ENCODE measurements at regions of chr11 and their contacts with region 1.

Region 1: DNA sequence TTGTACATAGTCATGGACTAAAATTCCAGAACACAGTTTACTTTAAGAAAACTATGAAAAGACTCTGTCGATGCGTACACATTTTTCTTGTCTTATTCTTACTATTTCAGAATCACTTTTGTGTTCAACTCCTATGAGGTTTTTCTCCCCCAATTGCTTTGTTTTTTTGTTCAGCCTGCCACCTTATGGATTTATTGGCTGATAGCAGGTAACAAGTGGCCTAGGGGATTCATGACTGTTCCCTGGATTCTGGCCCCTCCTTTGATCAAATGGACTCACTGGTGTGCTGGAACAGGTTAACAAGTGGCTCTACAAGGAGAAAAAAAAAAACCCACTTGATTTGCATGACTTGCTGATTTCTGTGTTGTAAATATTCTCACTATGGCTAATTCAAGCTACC is 10.6 kb downstream of the MMP20 start:
- DNase-seq: no peak
- H3K4me3 Mint-ChIP-seq: no peak overlapping the region
- H3K27ac Mint-ChIP-seq: no peak overlapping the region
- H3K4me1 Mint-ChIP-seq: peaks cover 12% of the 10 kb centered on the region
- H3K27me3 Mint-ChIP-seq: no peaks in the 10 kb centered on the region

Region 2: GRCh38 chr11:102341844-102342318 is 272.6 kb before region 1 on chr11:
- CTCF ChIA-PET with region 1: interaction called, 19 read pairs
- POLR2A ChIA-PET with region 1: interaction called, 4 read pairs
- DNase-seq: peak; percentile 85
- H3K4me3 Mint-ChIP-seq: no peak overlapping the region
- H3K27ac Mint-ChIP-seq: no peak overlapping the region
- H3K4me1 Mint-ChIP-seq: peaks cover 17% of the 10 kb centered on the region
- H3K27me3 Mint-ChIP-seq: no peaks in the 10 kb centered on the region

Region 3: GRCh38 chr11:102367364-102367763 is 247.1 kb before region 1 on chr11:
- CTCF ChIA-PET with region 1: interaction called, 10 read pairs
- POLR2A ChIA-PET with region 1: no interaction called
- DNase-seq: no peak
- H3K4me3 Mint-ChIP-seq: no peak overlapping the region
- H3K27ac Mint-ChIP-seq: peak overlapping the region; percentile 36
- H3K4me1 Mint-ChIP-seq: peaks cover 38% of the 10 kb centered on the region
- H3K27me3 Mint-ChIP-seq: no peaks in the 10 kb centered on the region

Region 4: GRCh38 chr11:102592634-102593581 is 21.6 kb before region 1 on chr11:
- CTCF ChIA-PET with region 1: no interaction called
- POLR2A ChIA-PET with region 1: no interaction called
- DNase-seq: no peak
- H3K4me3 Mint-ChIP-seq: no peak overlapping the region
- H3K27ac Mint-ChIP-seq: no peak overlapping the region
- H3K4me1 Mint-ChIP-seq: peaks cover 4% of the 10 kb centered on the region
- H3K27me3 Mint-ChIP-seq: no peaks in the 10 kb centered on the region

Region 5: DNA sequence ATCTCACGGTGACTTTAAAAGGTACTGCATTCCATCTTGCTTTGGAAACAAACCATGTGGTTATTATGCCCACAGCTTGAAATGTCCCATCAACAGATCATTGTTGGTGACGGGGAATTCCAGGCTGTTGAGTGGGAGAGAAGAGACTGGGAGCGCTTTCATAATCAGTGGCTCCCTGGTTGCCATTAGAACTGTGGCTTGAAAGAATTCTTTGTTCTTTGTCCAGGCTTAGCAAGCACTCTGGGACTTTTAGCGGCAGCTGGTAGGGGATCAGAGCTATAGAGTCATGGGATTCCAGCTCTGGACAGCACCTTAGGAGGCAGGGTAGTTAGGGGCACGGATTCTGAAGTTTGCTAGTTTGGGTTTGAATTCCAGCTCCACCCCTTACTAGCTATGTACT is 11.4 kb before region 1 on chr11:
- CTCF ChIA-PET with region 1: interaction called, 10 read pairs
- POLR2A ChIA-PET with region 1: no interaction called
- DNase-seq: no peak
- H3K4me3 Mint-ChIP-seq: no peak overlapping the region
- H3K27ac Mint-ChIP-seq: no peak overlapping the region
- H3K4me1 Mint-ChIP-seq: peaks cover 21% of the 10 kb centered on the region
- H3K27me3 Mint-ChIP-seq: no peaks in the 10 kb centered on the region

Region 6: GRCh38 chr11:102630598-102631448 is 16.3 kb after region 1 on chr11:
- CTCF ChIA-PET with region 1: no interaction called
- POLR2A ChIA-PET with region 1: no interaction called
- DNase-seq: no peak
- H3K4me3 Mint-ChIP-seq: no peak overlapping the region
- H3K27ac Mint-ChIP-seq: no peak overlapping the region
- H3K4me1 Mint-ChIP-seq: no peaks in the 10 kb centered on the region
- H3K27me3 Mint-ChIP-seq: peaks cover 13% of the 10 kb centered on the region

Measured in activated CD4-positive, alpha-beta T cell treated with anti-CD3 and anti-CD28 coated beads, Interleukin-2, amount 10 ng/mL, durations not matched to agents 7 days and 5 days (primary cell).